RWPE1 (cell line): ENCODE measurements at regions of chr15 and their contacts with region 1.

Region 1: GRCh38 chr15:61834076-61834697 is 226.1 kb downstream of the VPS13C start:
- DNase-seq: peak; percentile 74
- H3K27ac ChIP-seq: no peak overlapping the region
- CTCF ChIP-seq: peak; percentile 99

Region 2: DNA sequence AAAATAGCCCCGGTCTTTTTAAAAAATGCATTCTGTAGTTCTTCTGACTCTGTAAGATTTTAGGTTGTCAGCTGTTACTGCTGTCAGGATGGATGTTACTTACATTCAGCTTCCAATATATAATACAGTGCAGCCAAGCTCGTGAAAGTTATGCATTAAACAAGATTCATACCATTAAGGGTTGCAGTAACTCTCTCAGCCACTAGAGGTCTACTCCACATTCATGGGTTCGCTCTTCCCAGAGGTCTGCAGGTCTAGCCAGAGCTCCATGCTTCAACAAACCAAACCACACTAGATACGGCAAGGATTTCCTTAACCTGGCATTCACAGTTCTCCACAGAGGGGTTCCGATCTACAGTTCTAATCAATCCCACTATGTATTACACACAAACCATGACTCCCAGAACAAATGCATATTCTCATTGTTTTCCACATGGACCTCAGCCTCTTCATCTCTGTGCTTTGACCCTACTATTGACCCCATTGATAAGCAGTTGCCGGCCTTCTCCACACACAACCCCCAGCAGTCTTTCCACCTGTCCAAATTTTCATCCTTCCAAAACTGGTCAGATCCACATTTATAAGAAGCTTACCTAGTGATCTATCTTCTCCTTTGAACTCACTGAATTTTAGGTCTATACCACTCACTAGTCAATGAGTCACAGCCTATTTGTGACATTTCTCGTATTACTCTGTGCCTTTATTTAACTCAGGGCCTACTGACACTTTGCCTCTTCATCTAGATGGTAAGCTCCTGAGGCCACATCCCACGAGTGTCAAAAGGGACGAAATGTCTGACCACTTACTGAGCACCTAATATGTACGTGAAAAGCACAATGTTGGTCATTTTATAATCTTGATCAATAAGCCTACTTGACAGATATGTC is 638.8 kb before region 1 on chr15:
- CTCF ChIA-PET with region 1: interaction called, 30 read pairs
- POLR2A ChIA-PET with region 1: no interaction called
- DNase-seq: peak; percentile 26
- H3K27ac ChIP-seq: no peak overlapping the region
- CTCF ChIP-seq: peak; percentile 73

Region 3: DNA sequence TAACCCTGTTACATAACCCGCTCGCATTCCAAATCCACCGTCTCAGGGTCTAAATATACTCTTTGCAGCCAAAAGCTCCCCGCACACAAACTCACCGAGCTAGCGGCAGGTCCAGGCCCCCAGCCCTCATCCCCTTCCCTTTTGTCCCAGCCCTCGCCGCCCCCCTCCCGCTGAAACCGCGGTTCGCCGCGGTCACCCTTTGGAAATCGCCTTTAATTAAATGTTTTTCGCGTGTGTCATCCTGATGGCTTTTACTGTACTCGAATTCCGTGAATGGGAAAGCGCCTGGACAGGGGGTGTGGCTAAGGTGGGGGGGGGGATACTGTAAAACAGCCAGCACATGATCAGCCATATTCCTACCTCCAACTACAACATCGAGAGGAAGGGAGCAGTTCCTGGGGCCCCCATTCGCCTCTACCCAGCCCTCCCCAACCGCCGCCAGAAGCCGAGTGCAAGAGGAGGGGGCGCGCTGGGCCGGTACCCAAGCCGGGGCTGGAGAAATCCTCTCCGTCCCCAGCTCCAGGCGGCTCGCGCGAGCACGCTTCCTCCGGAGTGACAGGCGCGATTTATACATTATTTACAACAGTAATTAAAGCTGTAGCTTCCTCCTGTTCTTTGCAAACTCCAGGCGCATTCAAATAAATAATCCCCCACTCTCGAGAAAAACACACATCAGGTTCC is 606.8 kb before region 1 on chr15:
- CTCF ChIA-PET with region 1: interaction called, 15 read pairs
- POLR2A ChIA-PET with region 1: no interaction called
- DNase-seq: peak; percentile 62
- H3K27ac ChIP-seq: no peak overlapping the region
- CTCF ChIP-seq: no peak

Region 4: DNA sequence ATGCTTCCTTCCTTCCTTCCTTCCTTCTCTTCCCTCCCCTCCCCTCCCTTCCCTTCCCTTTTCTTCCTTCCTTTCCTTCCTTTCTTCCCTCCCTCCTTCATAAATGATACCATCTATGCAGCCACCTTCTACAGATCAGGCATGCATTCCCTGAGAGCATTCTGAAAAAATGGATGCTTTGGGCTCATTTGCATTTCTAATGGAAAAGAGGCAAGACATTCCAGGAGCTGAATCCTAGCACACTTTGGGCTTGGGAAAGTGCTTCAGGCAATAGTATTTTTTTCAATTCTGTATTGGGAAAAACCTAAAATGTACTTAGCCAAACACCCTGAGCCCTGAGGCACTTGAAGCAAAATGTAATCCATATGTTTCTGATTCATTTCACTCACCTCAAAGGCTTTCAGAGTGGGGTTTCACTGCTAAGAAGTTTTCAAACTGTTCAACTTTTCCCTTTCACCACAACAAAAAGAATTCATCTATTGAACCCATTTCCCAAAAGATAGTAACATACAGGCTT is 384.9 kb before region 1 on chr15:
- CTCF ChIA-PET with region 1: interaction called, 10 read pairs
- POLR2A ChIA-PET with region 1: no interaction called
- DNase-seq: no peak
- H3K27ac ChIP-seq: no peak overlapping the region
- CTCF ChIP-seq: no peak

Region 5: GRCh38 chr15:61621146-61621545 is 213.0 kb before region 1 on chr15:
- CTCF ChIA-PET with region 1: interaction called, 10 read pairs
- POLR2A ChIA-PET with region 1: no interaction called
- DNase-seq: peak; percentile 30
- H3K27ac ChIP-seq: no peak overlapping the region
- CTCF ChIP-seq: peak; percentile 58